ENCODE measurements at regions of chr2 and their contacts with region 1.

Region 1: GRCh38 chr2:60439219-60439974 is 114.1 kb downstream of the BCL11A start:
- DNase-seq: peak; percentile 54 to 76 (median 58)
- ATAC-seq: peak; percentile 74 to 87 (median 77)
- H3K4me3 ChIP-seq: peak overlapping the region in 11 of 12 donors; percentile 16 to 46 (median 43)
- H3K27ac ChIP-seq: peak overlapping the region in 11 of 12 donors; percentile 44 to 84 (median 75)
- H3K4me1 ChIP-seq: peaks cover 0 to 37% (median 9%) of the 10 kb centered on the region in 12 donors
- H3K27me3 ChIP-seq: peaks cover 0 to 3% (median 0%) of the 10 kb centered on the region in 9 donors
- CTCF ChIP-seq: peak in 11 of 12 donors; percentile 22 to 57 (median 40)
- POLR2A ChIP-seq: no peak

Region 2: GRCh38 chr2:60337140-60337494 is 102.3 kb before region 1 on chr2:
- intact Hi-C with region 1: loop called in 1 of 10 experiments (anchors 10 kb)
- DNase-seq: peak in 3 of 5 donors; percentile 25 to 62 (median 55)
- ATAC-seq: peak; percentile 47 to 84 (median 64)
- H3K4me3 ChIP-seq: no peak overlapping the region
- H3K27ac ChIP-seq: no peak overlapping the region
- H3K4me1 ChIP-seq: peaks cover 0 to 26% (median 0%) of the 10 kb centered on the region in 12 donors
- H3K27me3 ChIP-seq: no peaks in the 10 kb centered on the region
- CTCF ChIP-seq: peak in 9 of 12 donors; percentile 11 to 49 (median 36)
- POLR2A ChIP-seq: no peak

Region 3: DNA sequence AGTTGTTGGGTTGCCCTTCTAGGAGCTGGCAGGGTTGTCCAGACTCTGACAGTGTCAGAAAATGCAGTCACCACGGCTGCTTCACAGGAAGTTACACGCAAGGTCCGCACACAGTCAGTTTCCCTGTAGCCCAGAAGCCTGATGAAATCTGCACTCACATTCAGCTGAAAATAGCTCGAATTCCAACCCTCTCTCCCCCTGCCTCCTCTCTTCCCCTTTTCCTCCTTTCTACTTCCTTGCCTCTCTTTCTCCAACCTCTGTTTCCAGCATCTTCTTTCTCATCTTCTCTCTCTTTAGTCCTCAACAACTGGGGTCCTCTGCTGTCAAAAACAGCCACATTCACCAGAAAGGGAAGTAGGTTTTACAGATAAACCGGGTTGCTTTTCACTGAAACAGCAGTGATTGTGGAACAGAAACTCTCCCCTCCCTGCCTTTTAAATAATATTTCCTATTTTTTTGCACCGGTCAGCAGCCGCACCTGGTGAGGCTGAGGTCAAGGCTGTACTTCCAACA is 44.8 kb after region 1 on chr2:
- intact Hi-C with region 1: loop called in 1 of 10 experiments (anchors 5 kb)
- DNase-seq: peak in 1 of 5 donors; percentile 54
- ATAC-seq: peak in 3 of 4 donors; percentile 49 to 59 (median 53)
- H3K4me3 ChIP-seq: peak overlapping the region in 1 of 12 donors; percentile 18
- H3K27ac ChIP-seq: peak overlapping the region; percentile 35 to 88 (median 79)
- H3K4me1 ChIP-seq: peaks cover 0 to 57% (median 38%) of the 10 kb centered on the region in 12 donors
- H3K27me3 ChIP-seq: peaks cover 0 to 6% (median 0%) of the 10 kb centered on the region in 9 donors
- CTCF ChIP-seq: no peak
- POLR2A ChIP-seq: no peak

Region 4: DNA sequence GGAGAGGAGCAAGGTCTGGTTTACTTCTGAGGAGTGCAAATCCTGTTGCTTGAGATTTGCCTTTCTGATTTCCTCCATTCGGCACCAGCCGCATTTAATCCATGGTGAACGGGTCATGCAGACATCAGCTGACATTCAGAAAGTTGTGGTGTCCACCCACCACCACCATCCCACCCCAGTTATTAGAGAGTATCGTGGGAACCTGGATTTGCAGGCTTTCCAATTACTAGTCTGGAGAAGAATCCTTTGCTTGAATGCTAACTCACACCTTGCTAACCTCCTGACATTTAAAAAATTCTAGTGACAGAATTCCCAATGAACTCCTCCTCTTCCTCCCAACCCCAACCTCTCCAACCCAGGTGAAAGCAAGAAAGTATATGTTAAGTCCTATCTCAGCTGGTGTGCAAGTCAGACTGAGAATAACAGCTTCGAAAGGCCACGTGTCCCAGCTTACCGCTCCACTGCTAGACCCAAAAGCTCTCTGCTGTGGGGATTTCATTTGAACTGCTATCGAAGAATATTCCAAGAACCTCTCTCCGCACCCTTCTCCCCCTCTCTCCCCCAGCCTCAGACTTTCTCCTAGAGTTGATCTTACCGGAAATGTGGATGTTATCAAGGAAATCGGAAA is 96.4 kb after region 1 on chr2:
- intact Hi-C with region 1: loop called in 1 of 10 experiments (anchors 5 kb)
- DNase-seq: no peak
- ATAC-seq: peak in 2 of 4 donors; percentile 15 to 29
- H3K4me3 ChIP-seq: no peak overlapping the region
- H3K27ac ChIP-seq: peak overlapping the region in 10 of 12 donors; percentile 13 to 70 (median 58)
- H3K4me1 ChIP-seq: peaks cover 0 to 82% (median 19%) of the 10 kb centered on the region in 12 donors
- H3K27me3 ChIP-seq: peaks cover 0 to 40% (median 3%) of the 10 kb centered on the region in 9 donors
- CTCF ChIP-seq: no peak
- POLR2A ChIP-seq: no peak

Measured in heart left ventricle (tissue), 16 donors.